Activated naive CD4-positive, alpha-beta T cell treated with anti-CD3 and anti-CD28 coated beads for 36 hours (primary cell): ENCODE measurements at regions of chr2 and their contacts with region 1.

Region 1: GRCh38 chr2:201363857-201364560 is 6.9 kb upstream of the FLACC1 start:
- DNase-seq: peak; percentile 48
- H3K4me3 Mint-ChIP-seq: no peak overlapping the region
- H3K27ac Mint-ChIP-seq: no peak overlapping the region
- H3K4me1 Mint-ChIP-seq: peaks cover 13% of the 10 kb centered on the region
- H3K27me3 Mint-ChIP-seq: no peaks in the 10 kb centered on the region

Region 2: GRCh38 chr2:200864176-200864976 is 499.6 kb before region 1 on chr2 and contains the start of gene CLK1:
- CTCF ChIA-PET with region 1: no interaction called
- intact Hi-C with region 1: no loop called
- DNase-seq: peak; percentile 98
- H3K4me3 Mint-ChIP-seq: peak within 1 kb of the TSS; percentile 98
- H3K27ac Mint-ChIP-seq: peak within 1 kb of the TSS; percentile 100
- H3K4me1 Mint-ChIP-seq: peaks cover 32% of the 10 kb centered on the region
- H3K27me3 Mint-ChIP-seq: no peaks in the 10 kb centered on the region
- total RNA-seq, gene CLK1: 174 to 196 TPM

Region 3: GRCh38 chr2:201344663-201345366 is 19.2 kb before region 1 on chr2:
- CTCF ChIA-PET with region 1: interaction called, 4 read pairs
- intact Hi-C with region 1: loop called (anchors 2 kb)
- DNase-seq: no peak
- H3K4me3 Mint-ChIP-seq: no peak overlapping the region
- H3K27ac Mint-ChIP-seq: no peak overlapping the region
- H3K4me1 Mint-ChIP-seq: no peaks in the 10 kb centered on the region
- H3K27me3 Mint-ChIP-seq: no peaks in the 10 kb centered on the region

Region 4: GRCh38 chr2:201353116-201353515 is 10.9 kb before region 1 on chr2:
- CTCF ChIA-PET with region 1: interaction called, 13 read pairs
- intact Hi-C with region 1: no loop called
- DNase-seq: no peak
- H3K4me3 Mint-ChIP-seq: no peak overlapping the region
- H3K27ac Mint-ChIP-seq: no peak overlapping the region
- H3K4me1 Mint-ChIP-seq: no peaks in the 10 kb centered on the region
- H3K27me3 Mint-ChIP-seq: no peaks in the 10 kb centered on the region